CD4-positive, alpha-beta memory T cell (primary cell): ENCODE measurements at regions of chr7 and their contacts with region 1.

Region 1: DNA sequence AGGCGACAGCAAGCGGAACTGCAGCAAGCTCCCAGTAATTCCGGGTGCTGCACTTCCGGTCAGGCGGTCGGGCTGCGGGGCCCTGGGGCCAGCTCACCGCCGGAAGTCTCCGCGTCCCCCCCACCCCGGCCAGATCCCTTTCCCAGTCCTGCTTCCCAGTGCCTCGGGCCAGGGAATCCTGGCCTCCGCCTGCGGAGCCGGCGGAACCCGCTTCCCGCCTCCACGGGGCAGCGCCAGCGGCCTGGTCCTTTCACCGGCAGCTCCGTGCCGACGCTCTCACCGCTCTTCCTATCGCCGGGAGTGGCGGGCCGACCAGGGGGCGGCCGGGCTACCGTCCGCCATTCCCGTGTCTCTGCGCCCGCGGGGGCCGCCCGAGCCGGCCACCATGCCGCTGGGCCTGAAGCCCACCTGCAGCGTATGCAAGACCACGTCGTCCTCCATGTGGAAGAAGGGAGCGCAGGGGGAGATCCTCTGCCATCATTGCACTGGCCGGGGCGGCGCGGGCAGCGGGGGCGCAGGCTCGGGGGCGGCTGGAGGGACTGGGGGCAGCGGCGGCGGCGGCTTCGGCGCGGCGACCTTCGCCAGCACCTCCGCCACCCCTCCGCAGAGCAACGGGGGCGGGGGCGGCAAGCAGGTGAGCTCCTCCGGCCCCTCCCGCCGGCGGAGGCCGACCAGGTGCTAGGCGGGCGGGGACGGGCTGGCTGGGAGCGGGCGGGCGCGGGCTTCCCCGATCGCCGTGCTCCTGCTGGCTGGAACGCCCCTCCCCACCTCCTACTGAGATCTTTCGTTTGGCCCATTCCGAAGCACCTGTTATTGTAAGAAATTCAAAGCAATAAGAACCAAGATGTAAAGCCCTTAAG is at the start of gene GATAD1:
- DNase-seq: peak; percentile 81 to 86 (median 84)
- H3K4me3 ChIP-seq: peak within 1 kb of the TSS; percentile 68 to 74
- H3K4me3 Mint-ChIP-seq: peak within 1 kb of the TSS; percentile 92 to 98 (median 94)
- H3K27ac ChIP-seq: peak within 1 kb of the TSS; percentile 97
- H3K27ac Mint-ChIP-seq: peak within 1 kb of the TSS; percentile 98 to 99 (median 98)
- H3K4me1 ChIP-seq: peaks cover 16% of the 10 kb centered on the region
- H3K4me1 Mint-ChIP-seq: peaks cover 7 to 24% (median 13%) of the 10 kb centered on the region in 4 donors
- H3K27me3 ChIP-seq: no peaks in the 10 kb centered on the region
- H3K27me3 Mint-ChIP-seq: no peaks in the 10 kb centered on the region
- total RNA-seq, gene GATAD1: 31.9 to 34.8 TPM

Region 2: DNA sequence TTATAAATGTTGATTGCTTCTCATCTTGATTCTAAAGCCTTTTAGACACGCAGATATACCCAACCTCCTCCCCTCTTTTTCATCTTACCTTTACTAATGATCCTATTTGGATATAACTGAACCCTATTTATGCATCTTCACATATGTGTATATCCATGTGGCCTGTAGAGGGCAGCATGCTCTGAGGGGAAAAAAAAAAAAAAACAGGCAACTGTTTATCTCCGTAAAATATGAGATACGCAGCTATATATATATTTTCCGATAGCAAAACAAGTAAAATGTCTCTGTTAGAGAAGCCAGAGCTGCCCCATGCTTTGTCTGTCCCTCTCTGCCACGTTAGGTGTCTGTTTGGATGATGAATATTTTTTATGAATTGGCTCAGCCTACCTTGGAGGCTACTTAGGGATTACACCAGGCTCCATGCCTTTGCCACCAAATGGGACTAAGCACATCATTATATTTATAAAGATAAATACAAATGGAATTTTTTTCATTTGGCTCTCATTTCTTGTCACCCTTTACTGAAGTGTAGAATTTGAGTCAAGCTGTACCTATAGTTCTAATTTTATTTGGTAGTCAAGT is 1358.1 kb before region 1 on chr7:
- CTCF ChIA-PET with region 1: no interaction called
- POLR2A ChIA-PET with region 1: no interaction called
- intact Hi-C with region 1: loop called (anchors 10 kb)
- DNase-seq: peak in 3 of 5 donors; percentile 5 to 12 (median 9)
- H3K4me3 ChIP-seq: no peak overlapping the region
- H3K4me3 Mint-ChIP-seq: peak overlapping the region in 2 of 8 donors; percentile 1 to 37
- H3K27ac ChIP-seq: no peak overlapping the region
- H3K27ac Mint-ChIP-seq: no peak overlapping the region
- H3K4me1 ChIP-seq: peaks cover 6% of the 10 kb centered on the region
- H3K4me1 Mint-ChIP-seq: peaks cover 8 to 17% (median 10%) of the 10 kb centered on the region in 4 donors
- H3K27me3 ChIP-seq: no peaks in the 10 kb centered on the region
- H3K27me3 Mint-ChIP-seq: peaks cover under 1 to 2% of the 10 kb centered on the region in 2 donors

Region 3: GRCh38 chr7:91880413-91881241 is 566.9 kb before region 1 on chr7 and contains the start of gene MTERF1:
- CTCF ChIA-PET with region 1: interaction called, 9 read pairs
- POLR2A ChIA-PET with region 1: interaction called, 9 read pairs
- intact Hi-C with region 1: loop called (anchors 1 kb)
- DNase-seq: peak; percentile 89 to 91 (median 90)
- H3K4me3 ChIP-seq: peak within 1 kb of the TSS; percentile 77 to 86
- H3K4me3 Mint-ChIP-seq: peak within 1 kb of the TSS; percentile 92 to 100 (median 98)
- H3K27ac ChIP-seq: peak within 1 kb of the TSS; percentile 71
- H3K27ac Mint-ChIP-seq: peak within 1 kb of the TSS; percentile 88 to 98 (median 95)
- H3K4me1 ChIP-seq: peaks cover 26% of the 10 kb centered on the region
- H3K4me1 Mint-ChIP-seq: peaks cover 30 to 46% (median 35%) of the 10 kb centered on the region in 4 donors
- H3K27me3 ChIP-seq: no peaks in the 10 kb centered on the region
- H3K27me3 Mint-ChIP-seq: no peaks in the 10 kb centered on the region
- total RNA-seq, gene MTERF1: 29.9 to 32.4 TPM

Region 4: DNA sequence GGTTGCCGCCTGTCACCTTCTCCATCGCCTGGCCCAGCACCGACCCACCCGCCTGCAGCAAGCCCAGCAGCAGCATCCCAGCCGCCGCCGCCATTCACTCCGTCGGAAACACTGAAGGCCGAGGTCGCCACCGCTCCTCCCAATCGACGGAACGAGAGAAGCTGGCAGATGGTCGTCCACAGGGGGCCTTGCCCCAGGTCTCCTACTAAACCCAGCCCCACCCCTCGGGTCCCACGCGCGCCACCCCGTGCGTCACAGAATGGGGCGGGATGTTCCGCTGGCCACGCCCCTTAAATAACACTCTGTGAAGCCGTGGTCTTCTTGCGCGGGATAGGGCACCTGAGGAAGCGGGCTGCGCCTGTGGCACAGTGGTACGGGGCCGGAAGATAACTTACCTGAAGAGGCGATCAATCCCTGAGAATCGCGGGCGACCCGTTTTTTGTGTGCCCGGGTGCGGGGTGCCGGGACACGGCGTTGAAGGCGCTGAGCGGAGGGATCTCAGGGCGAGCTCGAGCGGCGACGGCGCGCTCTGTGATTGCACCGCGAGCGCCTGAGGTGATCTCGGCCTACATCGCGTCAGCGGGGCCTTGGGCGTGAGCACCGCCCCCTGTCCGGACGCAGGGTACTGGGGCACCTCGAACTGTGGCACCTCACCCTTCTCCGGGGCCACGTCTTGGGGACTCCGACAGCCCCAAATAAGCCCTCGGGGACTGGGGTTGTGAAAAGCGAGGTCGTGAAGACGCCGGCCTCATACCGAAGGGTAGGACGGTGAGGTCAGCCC is 313.1 kb before region 1 on chr7 and contains the start of gene CYP51A1:
- CTCF ChIA-PET with region 1: interaction called, 3 read pairs
- POLR2A ChIA-PET with region 1: interaction called, 15 read pairs
- intact Hi-C with region 1: loop called (anchors 1 kb)
- DNase-seq: peak; percentile 94 to 97 (median 95)
- H3K4me3 ChIP-seq: peak within 1 kb of the TSS; percentile 45 to 92
- H3K4me3 Mint-ChIP-seq: peak within 1 kb of the TSS; percentile 96 to 100 (median 99)
- H3K27ac ChIP-seq: peak within 1 kb of the TSS; percentile 77
- H3K27ac Mint-ChIP-seq: peak within 1 kb of the TSS; percentile 97 to 100 (median 100)
- H3K4me1 ChIP-seq: peaks cover 19% of the 10 kb centered on the region
- H3K4me1 Mint-ChIP-seq: peaks cover 18 to 36% (median 26%) of the 10 kb centered on the region in 4 donors
- H3K27me3 ChIP-seq: no peaks in the 10 kb centered on the region
- H3K27me3 Mint-ChIP-seq: no peaks in the 10 kb centered on the region
- total RNA-seq, gene CYP51A1: 14.3 to 15.2 TPM

Region 5: GRCh38 chr7:92245487-92246362 is 201.8 kb before region 1 on chr7 and contains the starts of genes ANKIB1 and KRIT1:
- CTCF ChIA-PET with region 1: interaction called, 15 read pairs
- POLR2A ChIA-PET with region 1: interaction called, 49 read pairs
- intact Hi-C with region 1: loop called (anchors 2 kb)
- DNase-seq: peak; percentile 86 to 91 (median 88)
- H3K4me3 ChIP-seq: peak within 1 kb of the TSS; percentile 91 to 98
- H3K4me3 Mint-ChIP-seq: peak within 1 kb of the TSS; percentile 94 to 100 (median 99)
- H3K27ac ChIP-seq: peak within 1 kb of the TSS; percentile 97
- H3K27ac Mint-ChIP-seq: peak within 1 kb of the TSS; percentile 98 to 100 (median 100)
- H3K4me1 ChIP-seq: peaks cover 43% of the 10 kb centered on the region
- H3K4me1 Mint-ChIP-seq: peaks cover 26 to 49% (median 37%) of the 10 kb centered on the region in 4 donors
- H3K27me3 ChIP-seq: no peaks in the 10 kb centered on the region
- H3K27me3 Mint-ChIP-seq: no peaks in the 10 kb centered on the region
- total RNA-seq, gene ANKIB1: 77.7 to 78.5 TPM
- total RNA-seq, gene KRIT1: 66.0 to 80.7 TPM

Region 6: GRCh38 chr7:92461027-92462003 is 13.7 kb after region 1 on chr7:
- CTCF ChIA-PET with region 1: interaction called, 42 read pairs
- POLR2A ChIA-PET with region 1: interaction called, 7 read pairs
- intact Hi-C with region 1: no loop called
- DNase-seq: peak in 4 of 5 donors; percentile 22 to 33 (median 26)
- H3K4me3 ChIP-seq: no peak overlapping the region
- H3K4me3 Mint-ChIP-seq: no peak overlapping the region
- H3K27ac ChIP-seq: no peak overlapping the region
- H3K27ac Mint-ChIP-seq: peak overlapping the region in 1 of 7 donors; percentile 3
- H3K4me1 ChIP-seq: no peaks in the 10 kb centered on the region
- H3K4me1 Mint-ChIP-seq: peaks cover 0 to 2% (median 0%) of the 10 kb centered on the region in 4 donors
- H3K27me3 ChIP-seq: no peaks in the 10 kb centered on the region
- H3K27me3 Mint-ChIP-seq: no peaks in the 10 kb centered on the region

Region 7: GRCh38 chr7:92588561-92588960 is 141.0 kb after region 1 on chr7:
- CTCF ChIA-PET with region 1: no interaction called
- POLR2A ChIA-PET with region 1: interaction called, 18 read pairs
- intact Hi-C with region 1: loop called (anchors 1 kb)
- DNase-seq: peak in 1 of 5 donors; percentile 4
- H3K4me3 ChIP-seq: peak overlapping the region; percentile 82 to 98
- H3K4me3 Mint-ChIP-seq: peak overlapping the region; percentile 87 to 98 (median 96)
- H3K27ac ChIP-seq: peak overlapping the region; percentile 91
- H3K27ac Mint-ChIP-seq: peak overlapping the region; percentile 19 to 97 (median 80)
- H3K4me1 ChIP-seq: peaks cover 58% of the 10 kb centered on the region
- H3K4me1 Mint-ChIP-seq: peaks cover 41 to 72% (median 52%) of the 10 kb centered on the region in 4 donors
- H3K27me3 ChIP-seq: no peaks in the 10 kb centered on the region
- H3K27me3 Mint-ChIP-seq: no peaks in the 10 kb centered on the region